ENCODE measurements at regions of chr15 and their contacts with region 1.

Region 1: GRCh38 chr15:34038023-34038870 is 757 bp downstream of the AVEN start:
- DNase-seq: peak; percentile 75
- H3K4me3 ChIP-seq: peak overlapping the region; percentile 79 to 99 (median 95)
- H3K27ac ChIP-seq: peak overlapping the region; percentile 83
- H3K4me1 ChIP-seq: peaks cover 13% of the 10 kb centered on the region
- H3K27me3 ChIP-seq: no peaks in the 10 kb centered on the region
- CTCF ChIP-seq: no peak
- POLR2A ChIP-seq: peak; percentile 74

Region 2: GRCh38 chr15:33946152-33946551 is 92.1 kb before region 1 on chr15:
- CTCF ChIA-PET with region 1: no interaction called
- POLR2A ChIA-PET with region 1: no interaction called
- dilution Hi-C with region 1: no loop called
- intact Hi-C with region 1: no loop called
- DNase-seq: no peak
- H3K4me3 ChIP-seq: no peak overlapping the region
- H3K27ac ChIP-seq: no peak overlapping the region
- H3K4me1 ChIP-seq: no peaks in the 10 kb centered on the region
- H3K27me3 ChIP-seq: no peaks in the 10 kb centered on the region
- CTCF ChIP-seq: no peak
- POLR2A ChIP-seq: no peak

Region 3: GRCh38 chr15:34001536-34001935 is 36.7 kb before region 1 on chr15:
- CTCF ChIA-PET with region 1: no interaction called
- POLR2A ChIA-PET with region 1: interaction called, 4 read pairs
- dilution Hi-C with region 1: no loop called
- intact Hi-C with region 1: loop called (anchors 5 kb)
- DNase-seq: peak; percentile 53
- H3K4me3 ChIP-seq: no peak overlapping the region
- H3K27ac ChIP-seq: peak overlapping the region; percentile 48
- H3K4me1 ChIP-seq: peaks cover 6% of the 10 kb centered on the region
- H3K27me3 ChIP-seq: no peaks in the 10 kb centered on the region
- CTCF ChIP-seq: no peak
- POLR2A ChIP-seq: no peak